Vagina (tissue), 2 donors: ENCODE measurements at regions of chr11 and their contacts with region 1.

Region 1: DNA sequence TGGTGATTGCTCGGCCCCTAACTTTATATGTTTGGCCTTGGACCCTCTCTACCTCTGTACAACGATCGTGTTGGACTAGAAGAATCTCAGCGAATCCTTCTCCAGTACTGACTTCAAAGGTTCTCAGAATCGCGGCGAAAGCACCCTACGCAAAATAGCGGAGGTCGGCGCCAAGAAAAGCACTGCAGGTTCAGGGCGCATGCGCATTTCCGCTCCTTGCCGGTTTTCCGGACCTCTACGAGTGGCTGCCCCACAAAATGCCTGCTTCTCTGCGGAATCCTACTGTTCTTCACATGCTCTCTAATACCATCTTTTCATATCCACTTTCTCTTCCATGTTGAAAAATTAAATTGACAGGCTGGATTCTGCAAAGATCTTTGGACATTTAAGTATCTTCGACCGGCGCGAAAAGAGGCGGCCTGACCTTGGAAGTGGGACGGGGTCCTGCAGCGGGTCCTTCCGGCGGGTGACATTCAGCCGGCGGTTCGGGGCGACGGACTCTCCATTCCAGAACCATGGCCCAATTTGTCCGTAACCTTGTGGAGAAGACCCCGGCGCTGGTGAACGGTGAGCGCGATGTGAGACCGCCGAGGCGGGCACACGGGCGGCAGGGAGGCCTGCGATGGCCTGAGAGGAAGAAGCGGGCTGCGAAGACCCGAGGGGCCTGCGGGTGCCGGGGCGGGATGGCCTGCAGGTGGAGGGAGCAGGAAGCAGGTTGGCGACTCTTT is at the start of gene ATP5MG:
- DNase-seq: peak in 1 of 2 donors; percentile 87
- H3K4me3 ChIP-seq: peak within 1 kb of the TSS; percentile 67 to 100
- H3K27ac ChIP-seq: peak within 1 kb of the TSS; percentile 83
- H3K4me1 ChIP-seq: peaks cover 49% of the 10 kb centered on the region
- H3K27me3 ChIP-seq: no peaks in the 10 kb centered on the region
- CTCF ChIP-seq: no peak
- POLR2A ChIP-seq: no peak
- total RNA-seq, gene ATP5MG: 169 TPM

Region 2: GRCh38 chr11:118488480-118489109 is 87.3 kb after region 1 on chr11:
- intact Hi-C with region 1: loop called (anchors 5 kb)
- DNase-seq: no peak
- H3K4me3 ChIP-seq: no peak overlapping the region
- H3K27ac ChIP-seq: no peak overlapping the region
- H3K4me1 ChIP-seq: no peaks in the 10 kb centered on the region
- H3K27me3 ChIP-seq: no peaks in the 10 kb centered on the region
- CTCF ChIP-seq: peak; percentile 73 to 88 (median 86)
- POLR2A ChIP-seq: no peak

Region 3: DNA sequence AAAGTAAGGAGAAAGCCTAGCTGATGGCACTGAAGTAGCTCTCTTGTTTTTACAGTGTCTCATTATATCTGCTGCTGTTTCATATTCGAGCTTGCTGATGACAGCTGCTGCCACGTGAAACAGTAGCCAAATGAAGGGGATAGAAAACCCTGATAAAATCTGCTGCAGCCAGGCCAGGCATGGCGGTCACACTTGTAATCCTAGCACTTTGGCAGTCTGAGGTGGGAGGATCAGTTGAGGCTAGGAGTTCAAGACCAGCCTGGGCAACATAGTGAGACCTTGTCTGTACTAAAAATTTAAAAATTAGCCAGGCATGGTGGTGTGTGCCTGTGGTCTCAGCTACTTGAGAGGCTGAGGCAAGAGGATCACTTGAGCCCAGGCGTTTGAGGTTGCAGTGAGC is 151.0 kb after region 1 on chr11:
- intact Hi-C with region 1: no loop called
- DNase-seq: no peak
- H3K4me3 ChIP-seq: no peak overlapping the region
- H3K27ac ChIP-seq: no peak overlapping the region
- H3K4me1 ChIP-seq: no peaks in the 10 kb centered on the region
- H3K27me3 ChIP-seq: no peaks in the 10 kb centered on the region
- CTCF ChIP-seq: no peak
- POLR2A ChIP-seq: no peak